Activated naive CD4-positive, alpha-beta T cell treated with anti-CD3 and anti-CD28 coated beads for 36 hours (primary cell): ENCODE measurements at regions of chr2 and their contacts with region 1.

Region 1: GRCh38 chr2:204108330-204108751 is 171.8 kb downstream of the ICOS start:
- DNase-seq: peak; percentile 72
- H3K4me3 Mint-ChIP-seq: peak overlapping the region; percentile 71
- H3K27ac Mint-ChIP-seq: peak overlapping the region; percentile 96
- H3K4me1 Mint-ChIP-seq: peaks cover 75% of the 10 kb centered on the region
- H3K27me3 Mint-ChIP-seq: peaks cover 2% of the 10 kb centered on the region

Region 2: GRCh38 chr2:203730076-203730729 is 378.1 kb before region 1 on chr2:
- CTCF ChIA-PET with region 1: no interaction called
- intact Hi-C with region 1: loop called (anchors 2 kb)
- DNase-seq: no peak
- H3K4me3 Mint-ChIP-seq: peak overlapping the region; percentile 17
- H3K27ac Mint-ChIP-seq: peak overlapping the region; percentile 97
- H3K4me1 Mint-ChIP-seq: peaks cover 91% of the 10 kb centered on the region
- H3K27me3 Mint-ChIP-seq: no peaks in the 10 kb centered on the region

Region 3: GRCh38 chr2:203997980-203998809 is 110.1 kb before region 1 on chr2:
- CTCF ChIA-PET with region 1: interaction called, 4 read pairs
- intact Hi-C with region 1: loop called (anchors 1 kb)
- DNase-seq: no peak
- H3K4me3 Mint-ChIP-seq: peak overlapping the region; percentile 4
- H3K27ac Mint-ChIP-seq: peak overlapping the region; percentile 77
- H3K4me1 Mint-ChIP-seq: peaks cover 68% of the 10 kb centered on the region
- H3K27me3 Mint-ChIP-seq: no peaks in the 10 kb centered on the region

Region 4: GRCh38 chr2:204145263-204145751 is 37.0 kb after region 1 on chr2:
- CTCF ChIA-PET with region 1: interaction called, 12 read pairs
- intact Hi-C with region 1: loop called (anchors 1 kb)
- DNase-seq: peak; percentile 90
- H3K4me3 Mint-ChIP-seq: peak overlapping the region; percentile 65
- H3K27ac Mint-ChIP-seq: peak overlapping the region; percentile 22
- H3K4me1 Mint-ChIP-seq: peaks cover 9% of the 10 kb centered on the region
- H3K27me3 Mint-ChIP-seq: peaks cover 5% of the 10 kb centered on the region

Region 5: DNA sequence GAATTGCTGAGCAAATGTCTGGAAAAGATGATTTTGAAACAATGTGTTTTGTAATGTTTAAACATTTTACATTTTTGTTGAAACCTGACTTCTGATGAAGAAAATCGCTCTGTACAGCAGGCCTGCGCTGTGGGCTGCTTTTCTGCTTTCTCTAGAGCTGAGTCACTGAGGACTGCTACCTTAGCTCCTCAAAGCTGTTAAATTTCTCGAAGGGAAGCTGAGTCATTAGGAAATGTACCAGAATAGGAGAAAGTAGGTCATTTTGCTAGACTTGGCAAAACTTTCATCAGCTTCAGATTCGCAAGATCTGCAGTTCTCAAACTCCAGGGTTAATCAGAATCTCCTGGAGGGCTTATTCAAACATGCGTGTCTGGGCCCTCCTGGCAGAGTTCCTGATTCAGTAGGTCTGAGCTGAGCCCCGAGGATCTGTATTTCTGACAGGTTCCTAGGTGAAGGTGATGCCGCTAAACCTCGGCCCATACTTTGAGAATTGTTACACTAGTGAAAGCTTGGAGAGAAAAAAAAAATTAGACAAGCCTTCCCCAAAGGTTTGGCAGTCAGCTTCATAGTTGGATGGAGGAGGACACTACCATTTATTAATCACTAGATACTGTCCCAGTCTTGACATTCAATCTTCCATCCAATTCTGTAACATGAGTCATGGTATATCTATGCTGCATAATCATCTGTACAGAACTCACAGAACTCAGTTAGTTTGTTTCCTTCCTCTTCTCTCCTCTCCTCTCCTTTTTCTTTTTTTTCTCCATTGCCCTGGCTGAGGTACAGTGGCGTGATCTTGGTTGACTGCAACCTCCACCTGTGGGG is 734.5 kb after region 1 on chr2:
- CTCF ChIA-PET with region 1: no interaction called
- intact Hi-C with region 1: loop called (anchors 5 kb)
- DNase-seq: peak; percentile 51
- H3K4me3 Mint-ChIP-seq: no peak overlapping the region
- H3K27ac Mint-ChIP-seq: peak overlapping the region; percentile 61
- H3K4me1 Mint-ChIP-seq: peaks cover 14% of the 10 kb centered on the region
- H3K27me3 Mint-ChIP-seq: no peaks in the 10 kb centered on the region

Region 6: GRCh38 chr2:205372141-205372540 is 1263.8 kb after region 1 on chr2:
- CTCF ChIA-PET with region 1: no interaction called
- intact Hi-C with region 1: loop called (anchors 10 kb)
- DNase-seq: no peak
- H3K4me3 Mint-ChIP-seq: no peak overlapping the region
- H3K27ac Mint-ChIP-seq: no peak overlapping the region
- H3K4me1 Mint-ChIP-seq: peaks cover 29% of the 10 kb centered on the region
- H3K27me3 Mint-ChIP-seq: no peaks in the 10 kb centered on the region